Posterior vena cava (tissue), 2 donors: ENCODE measurements at regions of chr5 and their contacts with region 1.

Region 1: GRCh38 chr5:177256296-177256695 is 47.2 kb downstream of the RAB24 start:
- DNase-seq: no peak

Region 2: GRCh38 chr5:177241768-177242167 is 14.5 kb before region 1 on chr5:
- intact Hi-C with region 1: no loop called
- DNase-seq: no peak

Region 3: GRCh38 chr5:177269976-177270375 is 13.7 kb after region 1 on chr5:
- intact Hi-C with region 1: loop called in 1 of 2 experiments (anchors 1 kb)
- DNase-seq: no peak